Right cardiac atrium (tissue), 5 donors: ENCODE measurements at regions of chr22 and their contacts with region 1.

Region 1: DNA sequence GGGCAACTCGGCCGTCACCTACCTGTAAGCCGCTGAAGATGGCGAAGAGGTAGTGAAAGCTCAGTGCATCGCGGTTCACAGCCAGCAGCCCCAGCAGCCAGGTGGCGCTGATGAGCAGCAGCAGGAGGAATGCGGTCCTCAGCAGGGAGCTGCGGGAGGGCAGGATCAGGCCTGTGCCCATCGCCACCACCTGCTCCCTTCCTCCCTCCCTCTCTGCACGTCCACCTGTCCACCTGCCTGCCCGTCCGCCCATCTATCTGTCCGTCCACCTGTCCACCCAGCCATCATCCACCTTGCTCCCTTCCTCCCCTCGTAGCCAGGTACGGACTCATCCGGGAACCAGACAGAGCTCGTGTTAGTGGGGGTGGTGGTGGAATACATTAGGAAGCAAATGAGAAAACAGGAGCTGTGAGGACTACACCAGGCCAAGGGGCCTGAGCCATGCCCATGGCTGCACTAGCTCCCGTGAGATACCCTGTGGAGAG is 32.2 kb downstream of the TRMU start:
- DNase-seq: peak; percentile 60 to 84 (median 83)
- ATAC-seq: peak; percentile 47 to 56
- H3K4me3 ChIP-seq: no peak overlapping the region
- H3K27ac ChIP-seq: no peak overlapping the region
- H3K4me1 ChIP-seq: no peaks in the 10 kb centered on the region
- H3K27me3 ChIP-seq: no peaks in the 10 kb centered on the region

Region 2: DNA sequence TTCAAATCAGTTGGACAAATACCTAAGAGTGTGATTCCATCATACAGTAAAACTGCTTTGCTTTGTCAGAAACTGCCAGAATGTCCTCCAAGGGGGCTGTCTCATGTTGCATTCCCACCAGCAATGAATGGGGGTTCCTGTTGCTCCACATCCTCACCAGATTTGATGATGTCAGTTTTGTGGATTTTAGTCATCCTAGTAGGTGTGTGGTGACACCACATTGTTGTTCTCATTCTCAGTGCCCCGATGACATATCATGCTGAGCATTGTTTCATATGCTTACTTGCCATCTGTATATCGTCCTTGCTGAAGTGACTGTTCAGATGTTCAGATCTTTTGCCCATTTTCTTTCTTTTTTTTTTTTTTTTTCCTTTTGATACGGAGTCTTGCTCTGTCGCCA is 154.7 kb before region 1 on chr22:
- intact Hi-C with region 1: no loop called
- DNase-seq: no peak
- ATAC-seq: no peak
- H3K4me3 ChIP-seq: no peak overlapping the region
- H3K27ac ChIP-seq: no peak overlapping the region
- H3K4me1 ChIP-seq: no peaks in the 10 kb centered on the region
- H3K27me3 ChIP-seq: no peaks in the 10 kb centered on the region

Region 3: DNA sequence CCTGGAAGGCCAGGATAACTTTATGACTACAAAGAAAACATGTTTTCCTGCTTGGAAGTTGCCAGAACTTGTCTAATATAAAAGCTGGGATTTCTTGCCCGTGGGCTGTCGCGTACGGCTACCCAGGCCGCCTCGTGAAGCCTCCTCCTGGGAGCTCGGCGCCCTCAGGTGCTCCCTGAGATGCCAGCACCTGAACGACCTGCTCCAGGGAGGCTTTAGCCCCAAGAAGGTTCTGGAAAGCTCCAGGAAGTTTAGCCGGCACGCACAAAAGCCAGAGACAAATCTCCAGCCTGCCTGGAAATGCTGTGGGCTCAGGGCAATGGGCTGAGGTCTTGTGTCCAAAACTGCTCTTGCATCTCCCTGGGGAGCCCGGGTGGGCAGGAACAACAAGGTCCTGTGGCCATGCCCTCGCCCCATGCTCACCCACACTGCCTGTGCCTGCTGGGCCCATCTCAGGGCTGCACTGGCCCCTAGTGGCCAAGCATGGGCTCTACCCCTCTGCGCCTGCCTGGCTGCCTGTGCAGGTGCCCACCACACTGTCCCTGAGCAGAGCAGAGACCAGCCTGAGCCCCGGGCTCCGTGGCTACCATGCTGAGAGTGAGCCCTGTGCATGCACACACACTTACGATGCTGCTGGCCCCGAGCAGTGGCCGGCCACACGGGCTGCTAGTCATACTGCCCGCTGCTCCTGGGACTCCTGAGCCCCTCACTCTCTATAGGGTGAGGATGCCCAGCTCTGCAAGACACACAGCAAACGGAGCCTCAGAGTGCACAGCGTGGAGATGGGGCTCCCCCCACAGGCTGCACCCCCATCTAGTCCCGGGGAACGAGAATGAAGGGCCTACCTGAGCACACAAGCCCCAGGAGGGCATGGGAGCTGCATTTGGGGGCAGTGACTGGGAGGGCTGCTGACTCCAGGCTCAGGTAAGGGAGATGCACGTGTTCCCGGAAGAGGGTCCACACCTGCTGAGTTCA is 174.5 kb after region 1 on chr22:
- intact Hi-C with region 1: loop called (anchors 2 to 5 kb)
- DNase-seq: peak; percentile 76 to 90 (median 85)
- ATAC-seq: peak; percentile 83 to 86
- H3K4me3 ChIP-seq: no peak overlapping the region
- H3K27ac ChIP-seq: no peak overlapping the region
- H3K4me1 ChIP-seq: no peaks in the 10 kb centered on the region
- H3K27me3 ChIP-seq: no peaks in the 10 kb centered on the region